Heart left ventricle (tissue), 16 donors: ENCODE measurements at regions of chr4 and their contacts with region 1.

Region 1: GRCh38 chr4:1260418-1261106 is 11.6 kb upstream of the CTBP1 start:
- DNase-seq: no peak
- ATAC-seq: no peak
- H3K4me3 ChIP-seq: no peak overlapping the region
- H3K27ac ChIP-seq: no peak overlapping the region
- H3K4me1 ChIP-seq: no peaks in the 10 kb centered on the region
- H3K27me3 ChIP-seq: no peaks in the 10 kb centered on the region
- CTCF ChIP-seq: no peak
- POLR2A ChIP-seq: no peak

Region 2: DNA sequence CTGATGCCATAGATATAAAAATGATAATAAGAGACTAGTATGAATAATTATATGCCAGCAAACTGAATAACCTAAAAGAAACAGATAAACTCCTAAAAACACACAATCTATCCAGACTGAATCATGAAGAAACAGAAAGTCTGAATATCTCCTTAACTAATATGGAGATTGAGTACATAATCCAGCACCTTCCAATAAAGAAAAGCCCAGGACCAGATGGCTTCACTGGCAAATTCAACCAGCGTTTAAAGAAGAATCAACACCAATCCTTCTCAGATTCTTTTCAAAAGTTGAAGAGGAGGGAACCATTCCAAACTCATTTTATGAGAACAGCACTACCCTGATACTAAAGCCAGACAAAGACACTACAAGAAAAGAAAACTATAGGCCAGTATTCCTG is 120.7 kb before region 1 on chr4:
- intact Hi-C with region 1: loop called in 1 of 10 experiments (anchors 5 kb)
- DNase-seq: no peak
- ATAC-seq: no peak
- H3K4me3 ChIP-seq: no peak overlapping the region
- H3K27ac ChIP-seq: no peak overlapping the region
- H3K4me1 ChIP-seq: peaks cover 0 to 17% (median 0%) of the 10 kb centered on the region in 12 donors
- H3K27me3 ChIP-seq: peaks cover 0 to 22% (median 3%) of the 10 kb centered on the region in 9 donors
- CTCF ChIP-seq: no peak
- POLR2A ChIP-seq: no peak